ENCODE measurements at regions of chr1 and their contacts with region 1.

Region 1: DNA sequence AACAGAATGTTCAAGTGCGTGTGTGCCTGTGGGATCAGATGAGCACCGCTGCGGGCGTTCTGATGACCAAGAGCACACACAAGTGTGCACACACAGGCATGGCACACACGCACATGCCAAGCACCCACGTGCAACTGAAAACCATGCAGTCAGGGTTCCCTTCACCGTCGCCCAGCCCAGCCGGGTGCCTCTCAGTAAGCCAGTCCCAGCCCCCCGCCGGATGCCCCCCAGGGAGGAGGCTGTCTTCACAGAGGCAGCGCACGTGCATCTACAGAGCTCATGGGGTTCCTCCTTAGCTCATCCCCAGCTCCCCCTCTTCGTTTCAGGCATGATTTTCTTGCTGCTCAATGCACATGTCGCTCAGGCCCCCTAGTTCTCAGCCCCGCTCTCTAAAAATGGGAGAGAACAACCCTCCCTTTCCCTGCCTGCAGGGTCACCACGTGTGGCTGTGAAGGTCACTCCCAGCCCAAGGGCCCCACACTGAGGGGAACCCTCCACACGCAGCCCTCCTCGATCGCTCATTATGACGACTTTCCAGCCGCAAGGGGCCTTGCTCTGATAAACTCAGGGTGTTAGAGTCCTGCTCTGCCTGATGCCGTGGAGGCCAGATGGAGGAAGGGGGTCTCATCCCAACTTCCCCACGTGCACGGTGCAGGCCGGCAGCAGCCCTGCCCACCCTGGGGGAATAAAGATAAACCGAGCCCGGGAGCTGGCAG is 30.4 kb upstream of the ARHGEF16 start:
- DNase-seq: no peak
- H3K4me3 ChIP-seq: no peak overlapping the region
- H3K4me3 Mint-ChIP-seq: no peak overlapping the region
- H3K27ac Mint-ChIP-seq: no peak overlapping the region
- H3K4me1 ChIP-seq: no peaks in the 10 kb centered on the region
- H3K4me1 Mint-ChIP-seq: no peaks in the 10 kb centered on the region
- H3K27me3 ChIP-seq: no peaks in the 10 kb centered on the region
- H3K27me3 Mint-ChIP-seq: no peaks in the 10 kb centered on the region
- CTCF ChIP-seq: no peak

Region 2: DNA sequence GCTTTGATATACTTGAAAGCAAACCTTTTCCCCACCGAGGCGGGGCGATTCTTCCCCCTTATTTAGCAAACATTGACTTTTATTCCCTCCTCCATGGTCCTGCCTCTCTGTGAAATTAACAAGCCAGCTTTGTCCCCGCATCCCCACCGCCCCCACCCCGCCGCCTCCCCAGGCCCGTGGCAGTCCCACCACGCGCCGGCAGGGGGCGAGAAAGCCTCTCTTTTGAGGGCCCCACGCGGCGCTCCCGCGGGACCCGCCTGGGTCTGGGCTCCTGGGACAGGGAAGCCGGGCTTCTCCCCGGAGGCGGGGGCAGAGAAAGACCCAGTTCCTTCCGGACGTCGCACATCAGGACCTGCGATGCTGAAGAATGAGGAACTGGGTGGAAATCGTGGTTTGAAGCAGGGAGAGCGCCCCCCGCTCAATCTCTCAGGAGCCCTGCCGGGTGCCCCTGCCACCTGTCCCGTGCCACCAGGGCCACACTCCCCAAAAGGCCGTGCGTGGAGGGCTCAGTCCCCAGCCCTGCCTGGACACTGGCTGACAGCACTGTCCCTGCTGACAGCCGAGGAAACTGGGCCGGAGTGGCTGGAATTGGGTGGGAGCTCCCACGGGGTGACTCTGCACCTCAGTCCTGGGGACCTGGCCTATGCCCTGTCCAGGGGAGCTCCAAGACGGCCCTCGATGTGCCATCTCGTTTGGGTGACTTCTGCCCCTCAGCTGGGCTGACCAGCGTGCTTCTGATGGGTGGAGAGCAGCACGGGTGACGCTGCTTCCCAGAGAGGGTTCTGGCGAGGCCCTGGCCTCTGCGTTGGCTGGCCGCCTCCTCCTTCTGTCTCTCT is 411.4 kb before region 1 on chr1:
- CTCF ChIA-PET with region 1: interaction called, 3 read pairs
- POLR2A ChIA-PET with region 1: no interaction called
- intact Hi-C with region 1: loop called (anchors 1 kb)
- DNase-seq: peak in 1 of 2 experiments; percentile 68
- H3K4me3 ChIP-seq: no peak overlapping the region
- H3K4me3 Mint-ChIP-seq: no peak overlapping the region
- H3K27ac Mint-ChIP-seq: no peak overlapping the region
- H3K4me1 ChIP-seq: no peaks in the 10 kb centered on the region
- H3K4me1 Mint-ChIP-seq: no peaks in the 10 kb centered on the region
- H3K27me3 ChIP-seq: no peaks in the 10 kb centered on the region
- H3K27me3 Mint-ChIP-seq: peaks cover 4% of the 10 kb centered on the region
- CTCF ChIP-seq: peak; percentile 60 to 77

Region 3: GRCh38 chr1:3069491-3070303 is 354.4 kb before region 1 on chr1:
- CTCF ChIA-PET with region 1: no interaction called
- POLR2A ChIA-PET with region 1: no interaction called
- intact Hi-C with region 1: loop called (anchors 2 kb)
- DNase-seq: peak in 1 of 2 experiments; percentile 68
- H3K4me3 ChIP-seq: peak overlapping the region; percentile 48
- H3K4me3 Mint-ChIP-seq: peak overlapping the region; percentile 86
- H3K27ac Mint-ChIP-seq: no peak overlapping the region
- H3K4me1 ChIP-seq: no peaks in the 10 kb centered on the region
- H3K4me1 Mint-ChIP-seq: no peaks in the 10 kb centered on the region
- H3K27me3 ChIP-seq: no peaks in the 10 kb centered on the region
- H3K27me3 Mint-ChIP-seq: no peaks in the 10 kb centered on the region
- CTCF ChIP-seq: peak; percentile 28 to 40

Region 4: GRCh38 chr1:3247521-3248121 is 176.4 kb before region 1 on chr1:
- CTCF ChIA-PET with region 1: no interaction called
- POLR2A ChIA-PET with region 1: no interaction called
- intact Hi-C with region 1: no loop called
- DNase-seq: no peak
- H3K4me3 ChIP-seq: no peak overlapping the region
- H3K4me3 Mint-ChIP-seq: no peak overlapping the region
- H3K27ac Mint-ChIP-seq: no peak overlapping the region
- H3K4me1 ChIP-seq: peaks cover 29% of the 10 kb centered on the region
- H3K4me1 Mint-ChIP-seq: peaks cover 6% of the 10 kb centered on the region
- H3K27me3 ChIP-seq: no peaks in the 10 kb centered on the region
- H3K27me3 Mint-ChIP-seq: no peaks in the 10 kb centered on the region
- CTCF ChIP-seq: no peak

Measured in Caco-2 (cell line).